CD4-positive, alpha-beta memory T cell (primary cell): ENCODE measurements at regions of chr19 and their contacts with region 1.

Region 1: DNA sequence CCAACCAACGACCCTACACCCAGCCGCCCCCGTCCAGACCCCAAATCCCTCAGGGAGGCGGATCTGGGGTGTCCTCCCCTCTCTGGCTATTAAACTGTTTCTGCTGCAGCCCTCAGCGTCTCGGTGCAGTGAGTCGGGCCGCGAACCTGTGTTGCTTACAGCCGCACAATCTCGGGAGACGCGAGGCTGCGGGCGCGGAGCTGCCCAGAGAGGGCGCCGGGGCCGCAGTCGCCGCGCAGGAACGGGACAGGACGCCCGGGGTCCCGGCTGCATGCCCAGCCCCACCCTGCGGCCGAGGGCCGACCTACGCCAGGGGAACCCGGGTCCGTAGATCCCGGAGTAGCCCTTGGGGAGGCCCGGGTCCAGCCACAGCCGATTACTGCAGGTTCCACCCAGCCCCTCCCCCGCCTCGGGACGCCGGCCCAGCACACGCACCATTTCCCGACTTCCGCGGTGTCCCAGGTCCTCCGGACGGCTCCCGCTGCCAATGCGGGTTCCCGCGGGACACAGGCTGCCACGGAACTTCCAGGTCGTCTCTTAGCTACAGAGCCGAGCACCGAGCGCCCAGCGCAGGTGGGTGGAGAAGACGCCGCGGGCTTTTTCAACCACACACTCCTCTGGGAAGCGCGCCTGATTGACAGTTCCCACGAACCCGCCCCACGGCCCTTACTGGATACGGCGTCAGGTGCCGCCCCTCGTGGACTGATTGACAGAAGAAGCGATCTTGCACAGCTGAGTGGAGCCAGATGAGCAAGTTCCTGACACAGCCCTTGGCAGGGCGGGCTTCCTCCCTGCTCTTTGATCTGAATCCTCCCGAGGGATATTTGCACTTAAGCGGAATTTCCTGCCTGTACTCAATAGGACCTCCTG is at the start of gene ZNF799:
- DNase-seq: peak; percentile 76 to 83 (median 77)
- H3K4me3 ChIP-seq: peak within 1 kb of the TSS; percentile 64 to 81
- H3K4me3 Mint-ChIP-seq: peak within 1 kb of the TSS; percentile 95 to 96 (median 96)
- H3K27ac ChIP-seq: peak within 1 kb of the TSS; percentile 53
- H3K27ac Mint-ChIP-seq: peak within 1 kb of the TSS; percentile 83 to 95 (median 90)
- H3K4me1 ChIP-seq: peaks cover 6% of the 10 kb centered on the region
- H3K4me1 Mint-ChIP-seq: peaks cover 12 to 27% (median 21%) of the 10 kb centered on the region in 4 donors
- H3K27me3 ChIP-seq: no peaks in the 10 kb centered on the region
- H3K27me3 Mint-ChIP-seq: no peaks in the 10 kb centered on the region
- total RNA-seq, gene ZNF799: 10.1 to 10.3 TPM

Region 2: DNA sequence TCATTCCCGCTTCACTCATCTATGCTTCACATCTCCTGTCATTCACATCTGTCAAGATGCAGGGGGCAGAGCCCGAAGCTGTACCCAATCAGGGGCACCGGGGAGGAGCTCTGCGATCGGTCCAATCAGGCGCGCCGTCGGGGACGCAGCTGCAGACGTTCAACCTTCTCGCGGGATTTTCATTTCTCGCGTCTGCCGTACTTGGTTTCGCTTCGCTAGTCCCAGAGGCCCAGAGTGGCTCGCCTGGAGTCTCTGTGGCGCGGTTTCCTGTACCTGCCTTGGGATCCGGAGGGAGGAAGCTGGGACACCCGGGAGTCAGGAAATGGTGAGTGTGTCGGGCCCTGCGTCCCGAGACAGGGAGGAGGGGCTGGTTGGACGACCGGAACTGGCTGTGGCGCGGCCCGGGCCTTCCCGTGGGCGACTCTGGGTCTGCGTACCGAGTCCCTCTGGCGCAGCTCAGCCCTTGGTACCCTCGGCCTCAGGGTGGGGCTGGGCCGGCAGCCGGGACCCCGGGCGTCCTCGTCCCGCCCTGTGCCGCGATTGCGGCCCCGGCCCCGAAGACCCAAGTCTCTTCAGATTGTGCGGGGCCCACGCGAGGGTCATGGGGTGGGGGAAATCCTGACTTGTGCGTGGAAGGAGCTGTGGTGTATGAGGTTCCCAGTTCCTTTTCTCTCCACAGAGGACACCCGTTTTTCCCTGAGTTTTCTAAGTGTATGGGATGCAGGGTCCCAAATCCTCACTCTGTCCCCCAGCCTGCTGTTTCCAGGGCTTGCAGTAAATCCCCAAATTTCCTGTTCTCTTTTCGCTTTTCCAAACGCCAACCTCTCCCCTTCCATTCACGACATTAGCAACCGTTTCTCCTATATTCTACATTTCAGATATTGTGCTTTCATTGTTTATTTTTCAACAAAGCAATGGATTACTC is 237.7 kb before region 1 on chr19 and contains the start of gene ZNF136:
- CTCF ChIA-PET with region 1: no interaction called
- POLR2A ChIA-PET with region 1: no interaction called
- intact Hi-C with region 1: loop called (anchors 1 kb)
- DNase-seq: peak; percentile 90 to 96 (median 92)
- H3K4me3 ChIP-seq: peak within 1 kb of the TSS; percentile 65 to 74
- H3K4me3 Mint-ChIP-seq: peak within 1 kb of the TSS; percentile 95 to 99 (median 98)
- H3K27ac ChIP-seq: peak within 1 kb of the TSS; percentile 98
- H3K27ac Mint-ChIP-seq: peak within 1 kb of the TSS; percentile 92 to 99 (median 99)
- H3K4me1 ChIP-seq: peaks cover 36% of the 10 kb centered on the region
- H3K4me1 Mint-ChIP-seq: peaks cover 32 to 56% (median 40%) of the 10 kb centered on the region in 4 donors
- H3K27me3 ChIP-seq: no peaks in the 10 kb centered on the region
- H3K27me3 Mint-ChIP-seq: no peaks in the 10 kb centered on the region
- total RNA-seq, gene ZNF136: 26.9 to 32.8 TPM

Region 3: DNA sequence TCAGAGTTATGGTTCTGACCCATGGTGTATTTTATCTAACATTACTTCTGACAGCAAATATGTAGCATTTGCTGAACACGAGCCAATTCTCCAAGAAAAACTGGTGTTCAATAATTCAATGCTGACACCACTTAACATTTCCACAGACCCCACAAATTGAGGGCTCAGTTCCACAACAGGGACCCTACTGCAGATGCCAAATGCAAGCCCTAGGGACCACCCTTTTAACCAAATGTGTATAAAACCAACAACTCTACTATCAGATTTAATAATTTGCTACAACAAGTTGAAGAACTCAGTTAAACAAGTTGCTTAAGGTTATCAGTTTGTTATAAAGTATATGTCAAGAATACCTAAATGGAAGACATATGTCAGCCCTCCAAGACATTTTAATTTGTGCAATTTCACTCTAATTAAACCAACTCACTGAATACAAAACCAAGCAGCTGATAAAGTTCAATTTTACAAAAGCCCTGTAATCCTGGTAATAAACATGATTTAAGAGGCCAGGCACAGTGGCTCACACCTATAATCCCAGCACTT is 112.8 kb before region 1 on chr19:
- CTCF ChIA-PET with region 1: no interaction called
- POLR2A ChIA-PET with region 1: no interaction called
- intact Hi-C with region 1: loop called (anchors 2 kb)
- DNase-seq: no peak
- H3K4me3 ChIP-seq: no peak overlapping the region
- H3K4me3 Mint-ChIP-seq: peak overlapping the region in 3 of 8 donors; percentile 8 to 36 (median 13)
- H3K27ac ChIP-seq: peak overlapping the region; percentile 43
- H3K27ac Mint-ChIP-seq: peak overlapping the region; percentile 42 to 97 (median 81)
- H3K4me1 ChIP-seq: peaks cover 53% of the 10 kb centered on the region
- H3K4me1 Mint-ChIP-seq: peaks cover 33 to 63% (median 43%) of the 10 kb centered on the region in 4 donors
- H3K27me3 ChIP-seq: no peaks in the 10 kb centered on the region
- H3K27me3 Mint-ChIP-seq: no peaks in the 10 kb centered on the region

Region 4: GRCh38 chr19:12294249-12295158 is 106.4 kb before region 1 on chr19 and contains the start of gene ZNF44:
- CTCF ChIA-PET with region 1: no interaction called
- POLR2A ChIA-PET with region 1: interaction called, 6 read pairs
- intact Hi-C with region 1: loop called (anchors 1 kb)
- DNase-seq: peak; percentile 93 to 97 (median 94)
- H3K4me3 ChIP-seq: peak within 1 kb of the TSS; percentile 73 to 79
- H3K4me3 Mint-ChIP-seq: peak within 1 kb of the TSS; percentile 99 to 100 (median 99)
- H3K27ac ChIP-seq: peak within 1 kb of the TSS; percentile 80
- H3K27ac Mint-ChIP-seq: peak within 1 kb of the TSS; percentile 97 to 100 (median 99)
- H3K4me1 ChIP-seq: peaks cover 37% of the 10 kb centered on the region
- H3K4me1 Mint-ChIP-seq: peaks cover 26 to 44% (median 36%) of the 10 kb centered on the region in 4 donors
- H3K27me3 ChIP-seq: no peaks in the 10 kb centered on the region
- H3K27me3 Mint-ChIP-seq: no peaks in the 10 kb centered on the region
- total RNA-seq, gene ZNF44: 62.2 TPM

Region 5: DNA sequence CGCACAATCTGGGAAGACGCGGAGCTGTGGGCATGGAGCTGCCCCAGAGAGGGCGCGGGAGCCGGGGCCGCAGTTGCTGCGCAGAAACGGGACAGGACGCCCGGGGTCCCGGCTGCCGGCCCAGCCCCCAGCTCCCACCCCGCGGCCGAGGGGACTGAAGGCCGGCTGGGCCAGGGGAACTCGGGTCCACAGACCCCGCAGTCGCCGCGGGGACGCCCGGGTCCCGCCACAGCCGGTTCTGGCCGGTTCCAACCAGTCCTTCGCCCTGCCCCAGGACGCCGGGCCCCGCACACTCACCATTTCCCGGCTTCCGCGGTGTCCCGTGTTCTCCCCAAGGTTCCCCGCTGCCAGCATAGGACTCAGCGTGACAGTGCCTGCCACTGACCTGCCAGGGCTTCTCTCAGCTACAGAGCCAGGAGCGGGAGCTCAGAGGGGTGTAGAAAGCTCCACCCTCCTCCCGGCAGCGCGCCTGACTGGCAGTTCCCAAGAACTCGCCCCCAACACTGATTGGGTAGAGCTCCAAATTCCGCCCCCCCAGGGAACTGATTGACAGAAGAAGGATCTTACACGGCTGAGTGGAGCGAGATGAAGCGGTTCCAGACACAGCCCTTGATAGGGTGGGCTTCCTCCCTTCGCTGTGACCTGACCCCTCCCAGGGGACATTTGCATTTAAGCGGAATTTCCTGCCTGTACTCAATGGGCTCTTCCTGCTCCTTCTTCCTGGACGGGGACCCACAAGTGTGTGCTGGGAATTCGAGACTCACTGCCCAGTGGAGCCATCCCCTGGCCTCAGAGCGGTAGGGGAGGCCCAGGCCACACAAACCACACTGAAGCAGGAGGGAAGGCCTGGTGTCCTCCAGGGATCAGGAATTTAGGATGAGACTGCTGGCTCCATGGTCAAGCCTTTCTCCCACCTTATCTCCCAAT is 35.4 kb before region 1 on chr19 and contains the start of gene ZNF442:
- CTCF ChIA-PET with region 1: no interaction called
- POLR2A ChIA-PET with region 1: interaction called, 4 read pairs
- intact Hi-C with region 1: loop called (anchors 5 kb)
- DNase-seq: peak; percentile 71 to 84 (median 75)
- H3K4me3 ChIP-seq: peak within 1 kb of the TSS; percentile 62 to 69
- H3K4me3 Mint-ChIP-seq: peak within 1 kb of the TSS; percentile 91 to 98 (median 95)
- H3K27ac ChIP-seq: peak within 1 kb of the TSS; percentile 41
- H3K27ac Mint-ChIP-seq: peak within 1 kb of the TSS; percentile 41 to 90 (median 84)
- H3K4me1 ChIP-seq: peaks cover 17% of the 10 kb centered on the region
- H3K4me1 Mint-ChIP-seq: peaks cover 9 to 29% (median 20%) of the 10 kb centered on the region in 4 donors
- H3K27me3 ChIP-seq: no peaks in the 10 kb centered on the region
- H3K27me3 Mint-ChIP-seq: peaks cover 3 to 5% of the 10 kb centered on the region in 2 donors
- total RNA-seq, gene ZNF442: 2.5 to 3.8 TPM

Region 6: DNA sequence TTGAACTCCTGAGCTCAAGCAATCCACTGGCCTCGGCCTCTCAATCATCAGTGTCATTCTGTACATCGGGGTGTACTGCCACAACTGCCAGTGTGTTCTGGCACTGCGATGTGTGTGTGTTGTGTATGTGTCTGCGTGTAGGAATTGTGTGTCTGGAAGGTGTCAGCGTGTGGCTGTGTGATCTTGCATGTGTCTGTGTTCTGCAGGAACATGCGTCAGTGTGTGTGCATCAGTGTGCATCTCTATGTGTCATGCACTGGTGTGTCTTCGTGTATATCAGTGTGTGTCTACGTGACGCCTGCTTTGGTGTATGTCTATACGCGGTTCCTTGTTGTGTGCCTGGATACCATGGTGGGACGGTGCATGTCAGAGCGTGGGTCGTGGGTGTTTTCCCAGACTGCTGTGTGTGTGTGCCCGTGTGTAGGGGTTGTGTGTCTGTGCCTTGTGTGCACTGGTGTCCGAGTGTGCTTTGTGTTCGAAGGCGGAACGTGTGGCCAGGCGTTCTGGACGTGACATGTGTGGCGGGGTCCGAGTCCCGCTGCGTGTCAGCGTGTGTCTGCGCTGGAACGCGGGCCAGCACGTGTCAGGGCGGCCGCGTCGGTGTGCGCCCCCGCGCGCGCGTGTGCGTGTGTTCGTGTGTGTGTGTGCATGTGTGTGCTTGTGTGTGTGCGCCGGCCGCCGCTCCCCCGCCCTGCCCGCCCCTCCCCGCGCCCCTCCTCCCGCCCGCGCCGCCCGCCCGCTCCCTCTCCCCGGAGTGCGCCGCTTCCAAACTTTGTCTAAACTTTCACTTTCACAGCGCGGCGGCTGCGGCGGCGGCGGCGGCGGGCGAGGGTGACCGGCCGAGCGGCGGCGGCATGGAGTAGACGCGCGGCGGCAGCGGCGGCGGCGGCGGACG is 594.1 kb after region 1 on chr19 and contains the start of gene NFIX:
- CTCF ChIA-PET with region 1: no interaction called
- POLR2A ChIA-PET with region 1: no interaction called
- intact Hi-C with region 1: no loop called
- DNase-seq: peak; percentile 41 to 59 (median 51)
- H3K4me3 ChIP-seq: peak within 1 kb of the TSS in 1 of 2 donors; percentile 67
- H3K4me3 Mint-ChIP-seq: peak within 1 kb of the TSS; percentile 88 to 97 (median 90)
- H3K27ac ChIP-seq: no peak within 1 kb of the TSS
- H3K27ac Mint-ChIP-seq: peak within 1 kb of the TSS in 6 of 7 donors; percentile 27 to 96 (median 80)
- H3K4me1 ChIP-seq: peaks cover 5% of the 10 kb centered on the region
- H3K4me1 Mint-ChIP-seq: peaks cover 10 to 19% (median 13%) of the 10 kb centered on the region in 4 donors
- H3K27me3 ChIP-seq: no peaks in the 10 kb centered on the region
- H3K27me3 Mint-ChIP-seq: peaks cover 5 to 19% of the 10 kb centered on the region in 2 donors
- total RNA-seq, gene NFIX: 4.0 to 5.4 TPM